ENCODE measurements at regions of chr14 and their contacts with region 1.

Region 1: GRCh38 chr14:31084385-31084784 is 58.2 kb upstream of the STRN3 start:
- DNase-seq: no peak
- ATAC-seq: no peak

Region 2: DNA sequence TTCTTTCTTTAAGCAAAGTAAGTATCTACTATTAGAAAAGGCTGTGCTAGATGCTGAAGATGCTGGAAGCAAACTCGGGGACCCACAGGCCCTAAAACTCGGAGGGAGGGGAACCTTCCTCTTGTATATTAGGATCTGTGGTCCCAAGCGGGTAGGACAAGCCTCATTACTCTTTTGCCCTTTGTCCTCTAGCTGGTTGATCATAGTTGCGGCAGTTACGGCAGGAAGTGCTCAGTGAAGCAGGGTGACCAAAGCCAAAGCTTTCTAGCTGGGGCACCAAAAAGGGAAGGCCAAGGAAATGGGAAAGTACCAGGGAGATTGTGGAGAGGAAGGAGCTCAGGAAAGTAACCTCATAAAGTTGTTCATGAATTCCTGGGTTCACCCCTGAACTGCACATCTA is 385.9 kb before region 1 on chr14:
- intact Hi-C with region 1: no loop called
- DNase-seq: peak in 1 of 2 donors; percentile 9
- ATAC-seq: peak; percentile 90

Region 3: DNA sequence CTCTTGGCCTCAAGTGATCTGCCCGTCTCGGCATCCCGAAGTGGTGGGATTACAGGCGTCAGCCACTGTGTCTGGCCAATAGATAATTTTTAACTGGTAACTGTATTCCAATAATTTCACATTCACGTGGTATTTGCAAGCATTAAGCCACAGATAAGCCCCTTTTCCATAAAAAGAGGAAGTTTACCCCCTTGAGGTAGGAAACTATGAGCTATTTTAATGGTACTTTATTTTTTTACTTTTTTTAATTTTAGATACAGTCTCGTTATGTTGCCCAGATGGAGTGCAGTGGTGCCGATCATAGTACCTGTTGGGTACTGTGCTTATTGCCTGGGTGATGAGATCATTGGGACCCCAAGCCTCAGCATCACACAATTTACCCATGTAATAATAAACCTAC is 101.9 kb before region 1 on chr14:
- intact Hi-C with region 1: loop called in 1 of 2 experiments (anchors 5 kb)
- DNase-seq: no peak
- ATAC-seq: no peak

Measured in left colon (tissue), 2 donors.